ENCODE measurements at regions of chr3 and their contacts with region 1.

Region 1: GRCh38 chr3:161423911-161424522 is 52.7 kb upstream of the SPTSSB start:
- DNase-seq: no peak
- H3K4me3 Mint-ChIP-seq: no peak overlapping the region
- H3K27ac Mint-ChIP-seq: no peak overlapping the region
- H3K4me1 Mint-ChIP-seq: no peaks in the 10 kb centered on the region
- H3K27me3 Mint-ChIP-seq: no peaks in the 10 kb centered on the region

Region 2: GRCh38 chr3:160686955-160687535 is 737.0 kb before region 1 on chr3:
- CTCF ChIA-PET with region 1: interaction called, 4 read pairs
- intact Hi-C with region 1: loop called (anchors 5 kb)
- DNase-seq: no peak
- H3K4me3 Mint-ChIP-seq: no peak overlapping the region
- H3K27ac Mint-ChIP-seq: no peak overlapping the region
- H3K4me1 Mint-ChIP-seq: no peaks in the 10 kb centered on the region
- H3K27me3 Mint-ChIP-seq: no peaks in the 10 kb centered on the region

Region 3: GRCh38 chr3:160707187-160707794 is 716.7 kb before region 1 on chr3:
- CTCF ChIA-PET with region 1: no interaction called
- intact Hi-C with region 1: loop called (anchors 5 kb)
- DNase-seq: peak; percentile 56
- H3K4me3 Mint-ChIP-seq: no peak overlapping the region
- H3K27ac Mint-ChIP-seq: no peak overlapping the region
- H3K4me1 Mint-ChIP-seq: no peaks in the 10 kb centered on the region
- H3K27me3 Mint-ChIP-seq: peaks cover 32% of the 10 kb centered on the region

Region 4: DNA sequence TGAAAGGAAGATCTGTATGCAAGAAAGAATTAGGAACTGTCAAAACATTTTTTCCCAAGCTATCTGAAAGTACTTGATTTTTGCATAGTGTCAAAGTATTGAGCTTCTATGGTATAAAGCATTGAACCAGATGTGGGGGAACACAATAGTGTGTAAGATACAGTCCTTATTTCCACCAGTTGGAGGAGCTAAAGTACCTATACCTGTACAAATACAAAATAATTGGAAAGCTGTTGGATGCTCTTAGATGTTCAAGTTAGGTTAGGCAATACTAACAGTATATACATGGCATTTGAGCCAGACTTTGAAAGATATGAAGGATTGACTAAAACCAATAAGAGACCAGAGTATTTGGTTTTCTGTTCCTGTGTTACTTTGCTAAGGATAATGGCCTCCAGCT is 467.2 kb before region 1 on chr3:
- CTCF ChIA-PET with region 1: interaction called, 3 read pairs
- intact Hi-C with region 1: loop called (anchors 1 kb)
- DNase-seq: no peak
- H3K4me3 Mint-ChIP-seq: no peak overlapping the region
- H3K27ac Mint-ChIP-seq: no peak overlapping the region
- H3K4me1 Mint-ChIP-seq: no peaks in the 10 kb centered on the region
- H3K27me3 Mint-ChIP-seq: no peaks in the 10 kb centered on the region

Region 5: GRCh38 chr3:161096771-161097355 is 327.2 kb before region 1 on chr3:
- CTCF ChIA-PET with region 1: no interaction called
- intact Hi-C with region 1: loop called (anchors 2 kb)
- DNase-seq: peak; percentile 41
- H3K4me3 Mint-ChIP-seq: no peak overlapping the region
- H3K27ac Mint-ChIP-seq: no peak overlapping the region
- H3K4me1 Mint-ChIP-seq: no peaks in the 10 kb centered on the region
- H3K27me3 Mint-ChIP-seq: no peaks in the 10 kb centered on the region